A549 (cell line): ENCODE measurements at regions of chr3 and their contacts with region 1.

Region 1: DNA sequence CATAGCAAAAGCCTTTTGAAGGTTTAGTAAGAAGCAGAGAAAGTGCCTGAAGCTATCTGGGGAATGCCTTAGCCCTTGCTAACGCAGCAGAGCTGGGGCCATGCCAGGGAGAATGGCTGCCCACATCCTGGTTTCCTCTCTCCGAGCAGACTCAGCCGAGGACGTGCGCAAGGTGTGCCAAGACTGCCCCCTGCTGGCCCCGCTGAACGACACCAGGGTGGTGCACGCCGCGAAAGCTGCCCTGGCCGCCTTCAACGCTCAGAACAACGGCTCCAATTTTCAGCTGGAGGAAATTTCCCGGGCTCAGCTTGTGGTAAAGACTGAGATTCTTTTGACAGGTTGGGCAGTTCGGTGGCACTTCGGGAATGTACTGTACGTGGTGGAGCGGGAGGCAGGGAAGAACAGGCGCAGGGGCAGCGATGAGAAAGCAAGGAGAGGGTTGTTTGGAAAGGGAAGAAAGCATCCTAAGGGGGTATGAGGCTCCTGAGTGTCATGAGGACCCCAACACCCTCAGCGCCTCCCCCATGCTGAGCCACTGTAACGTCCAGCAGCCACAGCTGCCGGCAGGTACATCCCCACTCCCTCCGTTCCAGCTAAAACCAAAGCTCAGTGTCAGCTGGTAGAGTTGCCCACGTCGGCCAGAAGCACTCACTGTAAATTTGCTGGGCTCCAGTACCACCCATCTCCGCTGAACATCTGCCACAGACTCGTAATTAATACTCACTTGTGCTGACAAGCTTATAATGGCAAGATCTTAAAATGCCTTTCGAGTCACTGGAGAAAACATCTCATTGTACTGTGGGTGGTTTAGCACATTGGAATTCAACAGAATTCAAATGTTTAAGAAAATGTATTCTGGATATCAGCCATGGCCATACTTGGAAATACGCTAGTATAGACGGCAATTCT is 4.4 kb downstream of the AHSG start:
- DNase-seq: peak; percentile 86 to 87
- ATAC-seq: peak; percentile 97 to 99
- H3K4me3 ChIP-seq: peak overlapping the region; percentile 35
- H3K27ac ChIP-seq: peak overlapping the region; percentile 65 to 75; a peak in 5 of 6 replicates
- H3K4me1 ChIP-seq: peaks cover 8% of the 10 kb centered on the region
- CTCF ChIP-seq: peak; percentile 72
- EP300 ChIP-seq: no peak
- POLR2A ChIP-seq: no peak
- RAD21 ChIP-seq: peak; percentile 74 to 84

Region 2: DNA sequence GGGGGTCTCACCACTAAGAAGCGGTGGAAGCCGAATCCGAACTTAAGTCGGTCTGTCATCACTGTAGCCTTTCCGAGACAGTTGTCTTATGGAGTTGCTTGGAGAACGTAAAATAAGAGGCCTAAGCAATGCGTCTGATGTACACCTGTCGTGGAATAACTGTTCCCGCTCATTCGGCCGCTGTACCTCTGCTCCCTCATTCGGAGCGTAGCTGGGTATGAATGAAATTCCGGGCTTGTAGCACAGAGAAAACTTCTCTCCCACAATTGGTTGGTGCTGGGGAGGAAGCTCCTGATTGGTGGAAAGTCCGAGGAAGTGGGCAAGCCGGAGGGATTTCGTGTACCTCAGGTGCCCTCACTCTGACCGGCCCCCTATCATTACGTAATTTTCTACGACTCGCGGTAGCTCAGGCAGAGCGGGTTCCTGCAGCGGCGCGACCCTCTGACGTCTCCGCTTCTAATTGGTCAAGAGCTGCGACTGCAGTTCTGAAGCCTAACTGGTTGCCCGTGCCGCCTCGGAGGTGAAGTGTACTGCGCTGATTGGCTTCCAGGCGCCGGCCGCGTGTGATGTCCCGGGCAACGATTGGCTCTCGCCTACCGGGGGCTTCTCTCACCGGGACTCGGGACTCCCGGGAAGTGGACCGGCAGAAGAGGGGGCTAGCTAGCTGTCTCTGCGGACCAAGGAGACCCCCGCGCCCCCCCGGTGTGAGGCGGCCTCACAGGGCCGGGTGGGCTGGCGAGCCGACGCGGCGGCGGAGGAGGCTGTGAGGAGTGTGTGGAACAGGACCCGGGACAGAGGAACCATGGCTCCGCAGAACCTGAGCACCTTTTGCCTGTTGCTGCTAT is 47.0 kb before region 1 on chr3 and contains the start of gene DNAJB11:
- CTCF ChIA-PET with region 1: interaction called, 48 read pairs
- POLR2A ChIA-PET with region 1: interaction called, 5 read pairs
- DNase-seq: peak; percentile 97 to 99
- ATAC-seq: peak; percentile 94 to 95
- H3K4me3 ChIP-seq: peak within 1 kb of the TSS; percentile 85
- H3K27ac ChIP-seq: peak within 1 kb of the TSS; percentile 89 to 90
- H3K4me1 ChIP-seq: peaks cover 16% of the 10 kb centered on the region; the same call in 2 of the 3 replicates
- CTCF ChIP-seq: no peak
- EP300 ChIP-seq: no peak
- POLR2A ChIP-seq: peak; percentile 63
- RAD21 ChIP-seq: no peak
- polyA plus RNA-seq, gene DNAJB11: 36.0 and 61.9 TPM in 2 replicates

Region 3: DNA sequence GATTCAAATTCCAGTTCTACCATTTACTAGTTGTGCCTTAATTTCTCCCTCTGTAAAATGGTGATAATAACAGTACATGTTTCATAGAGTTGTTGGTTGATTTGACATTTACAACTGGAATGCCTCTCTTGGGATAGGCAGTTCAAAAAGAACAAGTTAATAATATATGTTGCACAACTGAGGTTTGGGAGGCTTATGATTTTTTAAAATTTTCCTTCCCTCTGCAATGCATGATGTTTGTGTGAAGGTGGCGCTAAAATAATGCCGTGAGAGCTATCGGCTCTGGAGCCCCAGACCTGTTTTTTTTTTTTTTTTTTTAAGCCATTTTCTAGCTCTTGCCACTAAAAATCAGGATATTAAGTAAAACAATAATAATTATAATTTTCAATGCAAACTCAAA is 28.2 kb before region 1 on chr3:
- CTCF ChIA-PET with region 1: interaction called, 62 read pairs
- POLR2A ChIA-PET with region 1: no interaction called
- DNase-seq: peak; percentile 27 to 35
- ATAC-seq: peak; percentile 53 to 65; a peak in 3 of 6 replicates
- H3K4me3 ChIP-seq: no peak overlapping the region
- H3K27ac ChIP-seq: peak overlapping the region; percentile 21 to 58; a peak in 2 of 6 replicates
- H3K4me1 ChIP-seq: peaks cover 26% of the 10 kb centered on the region
- CTCF ChIP-seq: peak; percentile 48
- EP300 ChIP-seq: no peak
- POLR2A ChIP-seq: no peak
- RAD21 ChIP-seq: peak; percentile 54 to 64; a peak in 4 of 5 replicates

Region 4: DNA sequence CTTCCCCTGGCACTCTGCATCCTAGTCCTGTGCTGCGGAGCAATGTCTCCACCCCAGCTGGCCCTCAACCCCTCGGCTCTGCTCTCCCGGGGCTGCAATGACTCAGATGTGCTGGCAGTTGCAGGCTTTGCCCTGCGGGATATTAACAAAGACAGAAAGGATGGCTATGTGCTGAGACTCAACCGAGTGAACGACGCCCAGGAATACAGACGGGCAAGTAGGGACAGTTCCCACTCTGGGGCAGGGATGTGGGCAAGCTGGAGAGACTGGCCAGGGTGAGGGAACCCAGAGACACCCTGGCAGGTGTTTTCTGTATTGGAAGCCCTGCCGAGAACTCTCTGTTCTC is 23.2 kb after region 1 on chr3:
- CTCF ChIA-PET with region 1: interaction called, 16 read pairs
- POLR2A ChIA-PET with region 1: no interaction called
- DNase-seq: peak; percentile 12 to 21
- ATAC-seq: peak; percentile 76 to 78
- H3K4me3 ChIP-seq: no peak overlapping the region
- H3K27ac ChIP-seq: peak overlapping the region; percentile 34 to 66; a peak in 4 of 6 replicates
- H3K4me1 ChIP-seq: peaks cover 13% of the 10 kb centered on the region; the same call in 2 of the 3 replicates
- CTCF ChIP-seq: no peak
- EP300 ChIP-seq: no peak
- POLR2A ChIP-seq: no peak
- RAD21 ChIP-seq: no peak

Region 5: DNA sequence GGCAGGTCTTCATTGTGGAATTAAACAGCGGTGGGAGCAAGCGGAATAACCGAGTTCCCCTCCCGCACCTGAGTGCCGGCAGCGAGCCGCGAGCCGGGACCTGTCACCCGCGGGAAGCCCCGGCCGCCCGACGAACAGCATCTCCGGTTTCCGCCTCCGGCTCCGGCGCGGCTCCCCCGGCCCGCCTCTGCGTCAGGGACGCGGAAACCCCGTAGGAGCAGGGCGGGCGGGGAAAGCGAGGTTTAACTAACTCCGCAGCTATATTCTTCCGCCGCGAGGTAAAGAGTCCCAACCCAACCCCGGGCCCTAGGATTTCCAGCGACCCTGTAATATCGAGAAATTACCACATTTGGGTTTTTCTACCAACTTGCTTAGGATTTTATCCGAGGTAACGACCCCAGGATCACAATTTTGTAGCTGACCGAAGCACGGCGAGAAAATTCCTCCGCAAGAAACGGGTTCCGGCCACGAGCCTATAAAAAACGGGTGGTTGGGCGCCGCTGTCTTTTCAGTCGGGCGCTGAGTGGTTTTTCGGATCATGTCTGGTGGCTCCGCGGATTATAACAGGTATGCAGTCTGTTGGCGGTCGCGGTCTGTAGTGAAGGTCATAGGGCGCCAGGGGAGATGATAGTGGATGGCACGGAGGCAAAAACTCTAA is 165.9 kb after region 1 on chr3 and contains the start of gene EIF4A2:
- CTCF ChIA-PET with region 1: interaction called, 8 read pairs
- POLR2A ChIA-PET with region 1: interaction called, 16 read pairs
- DNase-seq: peak; percentile 71 to 89
- ATAC-seq: peak; percentile 83 to 84
- H3K4me3 ChIP-seq: peak within 1 kb of the TSS; percentile 94
- H3K27ac ChIP-seq: peak within 1 kb of the TSS; percentile 96 to 100
- H3K4me1 ChIP-seq: peaks cover 27% of the 10 kb centered on the region
- CTCF ChIP-seq: no peak
- EP300 ChIP-seq: no peak
- POLR2A ChIP-seq: peak; percentile 96
- RAD21 ChIP-seq: 0 out of 5 replicates have a peak, but pooled peaks of 1 of the 2 experiments have one; percentile 5
- polyA plus RNA-seq, gene EIF4A2: 337 and 493 TPM in 2 replicates

Region 6: GRCh38 chr3:186826976-186827731 is 209.9 kb after region 1 on chr3:
- CTCF ChIA-PET with region 1: interaction called, 34 read pairs
- POLR2A ChIA-PET with region 1: no interaction called
- DNase-seq: peak; percentile 72 to 91
- ATAC-seq: peak; percentile 86 to 93
- H3K4me3 ChIP-seq: peak overlapping the region; percentile 70
- H3K27ac ChIP-seq: peak overlapping the region; percentile 86 to 99
- H3K4me1 ChIP-seq: peaks cover 10% of the 10 kb centered on the region; the same call in 1 of the 3 replicates
- CTCF ChIP-seq: no peak
- EP300 ChIP-seq: no peak
- POLR2A ChIP-seq: peak; percentile 74
- RAD21 ChIP-seq: no peak